Heart right ventricle (tissue), 16 donors: ENCODE measurements at regions of chr11 and their contacts with region 1.

Region 1: GRCh38 chr11:63573881-63574855 is 11.0 kb upstream of the PLAAT2 start:
- DNase-seq: peak in 1 of 2 donors; percentile 69
- ATAC-seq: peak; percentile 71 to 93 (median 85)
- H3K4me3 ChIP-seq: peak overlapping the region in 8 of 10 donors; percentile 2 to 41 (median 32)
- H3K27ac ChIP-seq: peak overlapping the region; percentile 28 to 84 (median 70)
- H3K4me1 ChIP-seq: peaks cover 5 to 27% (median 20%) of the 10 kb centered on the region in 9 donors
- H3K27me3 ChIP-seq: no peaks in the 10 kb centered on the region
- CTCF ChIP-seq: peak in 5 of 9 donors; percentile 9 to 43 (median 24)

Region 2: DNA sequence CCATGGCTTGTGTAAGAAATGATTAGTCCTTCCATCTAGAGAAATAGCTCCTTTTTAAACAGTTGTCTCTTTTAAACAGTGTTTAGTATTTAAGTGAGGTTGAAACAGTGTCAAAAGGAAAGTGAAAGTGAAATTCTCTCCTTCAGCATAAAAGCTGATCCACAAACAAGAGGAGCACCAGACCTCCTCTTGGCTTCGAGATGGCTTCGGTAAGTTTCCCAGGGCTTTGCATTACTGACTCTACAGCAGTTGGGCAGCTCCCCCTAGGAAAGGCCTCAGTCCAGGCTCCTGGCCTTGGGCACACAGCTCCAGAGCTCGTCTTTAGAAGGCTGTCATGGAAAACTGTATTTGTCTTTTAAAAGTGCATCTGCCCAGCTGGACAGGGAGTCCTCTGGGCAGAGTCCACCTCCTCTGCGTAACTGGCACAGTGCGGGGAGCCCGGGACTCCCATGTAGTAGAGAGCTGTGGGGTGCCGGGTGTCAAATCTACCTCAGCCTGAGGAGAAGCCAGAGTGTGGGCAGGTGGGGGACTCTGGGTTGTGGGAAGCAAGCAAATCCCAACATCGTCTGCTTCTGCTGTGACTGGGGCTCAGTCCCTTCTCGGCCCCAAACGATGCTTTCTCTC is 37.4 kb before region 1 on chr11 and contains the start of gene PLAAT4:
- intact Hi-C with region 1: loop called in 1 of 10 experiments (anchors 5 kb)
- DNase-seq: peak; percentile 21 to 31
- ATAC-seq: peak; percentile 54 to 75 (median 64)
- H3K4me3 ChIP-seq: peak within 1 kb of the TSS; percentile 26 to 61 (median 54)
- H3K27ac ChIP-seq: peak within 1 kb of the TSS; percentile 66 to 95 (median 85)
- H3K4me1 ChIP-seq: peaks cover 8 to 79% (median 27%) of the 10 kb centered on the region in 9 donors
- H3K27me3 ChIP-seq: no peaks in the 10 kb centered on the region
- CTCF ChIP-seq: peak in 2 of 9 donors; percentile 5 to 9
- total RNA-seq, gene PLAAT4: 3.3 to 565 (median 7.7) TPM

Region 3: GRCh38 chr11:63608351-63609038 is 34.3 kb after region 1 on chr11:
- intact Hi-C with region 1: loop called in 3 of 10 experiments (anchors 5 kb)
- DNase-seq: no peak
- ATAC-seq: no peak
- H3K4me3 ChIP-seq: no peak overlapping the region
- H3K27ac ChIP-seq: peak overlapping the region in 9 of 10 donors; percentile 66 to 95 (median 79)
- H3K4me1 ChIP-seq: peaks cover 11 to 60% (median 50%) of the 10 kb centered on the region in 9 donors
- H3K27me3 ChIP-seq: peaks cover 0 to 9% (median 0%) of the 10 kb centered on the region in 7 donors
- CTCF ChIP-seq: no peak

Region 4: DNA sequence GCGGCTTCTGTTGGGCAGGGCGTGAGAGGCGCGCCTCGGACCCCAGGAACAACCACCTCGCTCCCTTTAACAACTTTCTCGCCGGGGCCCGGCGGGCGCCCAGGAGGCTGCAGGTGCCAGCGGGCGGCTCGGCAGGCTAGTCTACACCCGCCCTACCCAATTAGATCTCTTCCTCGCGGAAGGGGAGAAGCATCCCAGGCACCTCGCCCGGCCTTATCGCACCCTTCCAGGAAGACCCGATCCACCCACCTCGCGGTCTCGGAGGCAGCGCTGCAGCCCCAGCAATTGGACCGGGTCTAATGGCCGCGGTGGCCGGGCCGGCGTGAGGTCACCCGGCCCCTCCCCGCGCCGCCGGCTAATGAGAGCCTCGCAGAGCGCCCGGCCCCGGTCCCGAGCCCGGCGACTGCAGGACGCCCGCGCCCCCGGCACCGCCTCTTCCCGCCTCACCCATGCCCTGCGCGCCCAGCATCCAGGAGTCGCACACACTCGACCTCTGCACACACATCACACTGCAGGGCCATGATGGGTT is 40.0 kb after region 1 on chr11 and contains the start of gene PLAAT3:
- intact Hi-C with region 1: loop called in 3 of 10 experiments (anchors 5 kb)
- DNase-seq: peak; percentile 82 to 90
- ATAC-seq: peak; percentile 90 to 96 (median 92)
- H3K4me3 ChIP-seq: peak within 1 kb of the TSS; percentile 63 to 95 (median 79)
- H3K27ac ChIP-seq: peak within 1 kb of the TSS; percentile 80 to 96 (median 89)
- H3K4me1 ChIP-seq: peaks cover 7 to 47% (median 43%) of the 10 kb centered on the region in 9 donors
- H3K27me3 ChIP-seq: peaks cover 0 to 21% (median 0%) of the 10 kb centered on the region in 7 donors
- CTCF ChIP-seq: peak in 1 of 9 donors; percentile 11
- total RNA-seq, gene PLAAT3: 82.8 to 211 (median 137) TPM